ENCODE measurements at regions of chr14 and their contacts with region 1.

Region 1: GRCh38 chr14:56422703-56423213 is 156.8 kb upstream of the TMEM260 start:
- DNase-seq: peak in 4 of 14 experiments; percentile 5 to 42 (median 40)
- ATAC-seq: no peak
- H3K4me3 ChIP-seq: no peak overlapping the region
- H3K4me3 Mint-ChIP-seq: no peak overlapping the region
- H3K27ac ChIP-seq: no peak overlapping the region
- H3K27ac Mint-ChIP-seq: no peak overlapping the region
- H3K4me1 ChIP-seq: no peaks in the 10 kb centered on the region
- H3K4me1 Mint-ChIP-seq: no peaks in the 10 kb centered on the region
- H3K27me3 ChIP-seq: no peaks in the 10 kb centered on the region
- H3K27me3 Mint-ChIP-seq: no peaks in the 10 kb centered on the region
- CTCF ChIP-seq: peak; percentile 40

Region 2: DNA sequence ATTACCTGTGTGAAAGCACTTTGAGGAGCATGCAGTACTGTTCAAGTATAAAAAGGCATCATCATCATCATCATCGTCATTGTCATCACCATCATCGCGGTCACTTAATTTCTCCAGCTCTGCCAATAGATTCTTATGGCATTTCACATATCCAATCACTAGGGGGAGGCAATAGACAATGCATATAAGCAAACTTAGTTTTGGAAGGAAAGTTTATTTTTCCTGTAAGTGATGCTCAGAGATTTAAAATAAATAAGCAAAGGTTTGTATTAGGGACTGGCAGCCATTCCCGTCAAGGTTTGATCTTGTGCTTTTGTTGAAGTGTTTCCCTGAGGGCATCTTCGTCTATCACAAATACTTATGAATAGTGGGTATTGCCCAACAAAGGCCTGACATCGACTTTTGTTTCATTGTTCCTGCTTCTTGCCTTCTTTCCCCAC is 715.4 kb before region 1 on chr14:
- CTCF ChIA-PET with region 1: no interaction called
- POLR2A ChIA-PET with region 1: no interaction called
- intact Hi-C with region 1: loop called in 1 of 2 experiments (anchors 5 kb)
- DNase-seq: peak in 3 of 14 experiments; percentile 22 to 34 (median 34)
- ATAC-seq: no peak
- H3K4me3 ChIP-seq: no peak overlapping the region
- H3K4me3 Mint-ChIP-seq: no peak overlapping the region
- H3K27ac ChIP-seq: no peak overlapping the region
- H3K27ac Mint-ChIP-seq: no peak overlapping the region
- H3K4me1 ChIP-seq: no peaks in the 10 kb centered on the region
- H3K4me1 Mint-ChIP-seq: no peaks in the 10 kb centered on the region
- H3K27me3 ChIP-seq: no peaks in the 10 kb centered on the region
- H3K27me3 Mint-ChIP-seq: no peaks in the 10 kb centered on the region
- CTCF ChIP-seq: peak; percentile 44

Region 3: GRCh38 chr14:55731881-55732498 is 690.8 kb before region 1 on chr14:
- CTCF ChIA-PET with region 1: no interaction called
- POLR2A ChIA-PET with region 1: no interaction called
- intact Hi-C with region 1: loop called (anchors 5 to 10 kb)
- DNase-seq: peak; percentile 9 to 69 (median 44)
- ATAC-seq: no peak
- H3K4me3 ChIP-seq: no peak overlapping the region
- H3K4me3 Mint-ChIP-seq: no peak overlapping the region
- H3K27ac ChIP-seq: no peak overlapping the region
- H3K27ac Mint-ChIP-seq: no peak overlapping the region
- H3K4me1 ChIP-seq: no peaks in the 10 kb centered on the region
- H3K4me1 Mint-ChIP-seq: no peaks in the 10 kb centered on the region
- H3K27me3 ChIP-seq: no peaks in the 10 kb centered on the region
- H3K27me3 Mint-ChIP-seq: no peaks in the 10 kb centered on the region
- CTCF ChIP-seq: peak; percentile 54